Sigmoid colon (tissue), 7 donors: ENCODE measurements at regions of chr16 and their contacts with region 1.

Region 1: GRCh38 chr16:48609652-48610029 is 339 bp downstream of the N4BP1 start:
- DNase-seq: peak; percentile 82
- H3K4me3 ChIP-seq: peak overlapping the region; percentile 57 to 98 (median 98)
- H3K27ac ChIP-seq: peak overlapping the region; percentile 88 to 93 (median 92)
- H3K4me1 ChIP-seq: peaks cover 0 to 44% (median 39%) of the 10 kb centered on the region in 4 donors
- H3K27me3 ChIP-seq: no peaks in the 10 kb centered on the region
- CTCF ChIP-seq: no peak
- EP300 ChIP-seq: no peak
- POLR2A ChIP-seq: no peak

Region 2: DNA sequence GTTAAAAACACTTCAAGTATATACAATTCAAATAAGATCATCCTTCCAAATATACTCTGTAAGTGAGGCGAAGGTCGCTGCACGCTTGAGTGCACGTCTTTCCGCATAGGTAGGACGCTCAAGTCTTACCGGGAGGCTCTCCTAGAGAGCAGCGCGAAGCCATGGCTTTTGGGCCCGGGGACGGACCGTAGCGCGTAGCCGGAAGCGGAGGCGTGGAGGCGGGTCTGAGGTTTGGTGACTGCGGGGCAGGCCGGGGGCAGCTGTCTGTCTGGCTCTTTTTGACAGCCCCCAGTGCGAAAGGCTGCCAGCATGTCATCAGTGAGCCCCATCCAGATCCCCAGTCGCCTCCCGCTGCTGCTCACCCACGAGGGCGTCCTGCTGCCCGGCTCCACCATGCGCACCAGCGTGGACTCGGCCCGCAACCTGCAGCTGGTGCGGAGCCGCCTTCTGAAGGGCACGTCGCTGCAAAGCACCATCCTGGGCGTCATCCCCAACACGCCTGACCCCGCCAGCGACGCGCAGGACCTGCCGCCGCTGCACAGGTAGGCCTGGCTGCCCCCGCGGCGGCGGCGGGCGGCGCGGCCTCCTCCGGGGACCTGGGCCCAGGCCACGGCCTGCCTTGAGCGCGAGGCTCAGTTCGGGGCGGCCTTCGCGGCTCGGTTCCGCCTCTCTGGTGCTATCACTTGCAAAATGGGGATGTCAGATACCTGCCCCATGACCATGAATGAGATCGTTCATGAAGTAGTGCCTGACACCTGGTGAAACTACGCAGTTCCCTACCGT is 365.4 kb before region 1 on chr16 and contains the start of gene LONP2:
- intact Hi-C with region 1: loop called (anchors 5 kb)
- DNase-seq: peak; percentile 92
- H3K4me3 ChIP-seq: peak within 1 kb of the TSS; percentile 81 to 94 (median 82)
- H3K27ac ChIP-seq: peak within 1 kb of the TSS; percentile 85 to 90 (median 88)
- H3K4me1 ChIP-seq: peaks cover 0 to 37% (median 31%) of the 10 kb centered on the region in 4 donors
- H3K27me3 ChIP-seq: no peaks in the 10 kb centered on the region
- CTCF ChIP-seq: no peak
- EP300 ChIP-seq: peak in 1 of 4 donors; percentile 34
- POLR2A ChIP-seq: peak; percentile 38 to 46
- total RNA-seq, gene LONP2: 42.3 to 60.3 (median 51.8) TPM

Region 3: DNA sequence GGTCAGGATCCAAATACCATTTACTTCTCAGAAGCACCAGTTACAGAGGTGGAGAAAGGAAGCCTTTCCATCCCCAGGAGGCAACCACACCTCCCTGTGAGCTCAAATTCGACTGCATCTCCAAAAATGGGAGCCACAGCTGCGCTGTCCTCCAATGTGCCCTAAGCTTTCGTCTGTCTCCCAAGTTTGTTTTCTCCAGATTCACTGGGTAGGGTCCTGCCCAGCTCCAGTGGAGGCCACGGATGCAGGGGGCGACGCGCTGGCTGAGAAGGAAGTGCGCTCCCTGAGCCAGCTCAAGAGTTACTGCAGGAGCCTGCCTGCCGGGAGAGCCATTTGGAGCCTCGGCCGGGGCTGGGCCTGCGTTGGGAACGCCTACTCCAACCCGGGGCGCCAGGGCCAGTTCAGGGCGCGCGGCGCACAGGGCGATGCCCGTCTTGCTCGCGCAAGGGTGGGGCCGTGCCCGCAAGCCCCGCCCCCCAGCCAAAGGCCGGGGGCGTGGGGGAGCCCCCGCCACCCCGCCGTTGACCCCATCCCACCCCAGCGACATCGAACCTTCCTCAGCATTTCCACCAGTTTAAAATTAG is 244.0 kb before region 1 on chr16:
- intact Hi-C with region 1: loop called (anchors 5 kb)
- DNase-seq: peak; percentile 94
- H3K4me3 ChIP-seq: peak overlapping the region; percentile 64 to 70 (median 65)
- H3K27ac ChIP-seq: peak overlapping the region; percentile 85 to 93 (median 89)
- H3K4me1 ChIP-seq: peaks cover 0 to 53% (median 34%) of the 10 kb centered on the region in 4 donors
- H3K27me3 ChIP-seq: no peaks in the 10 kb centered on the region
- CTCF ChIP-seq: no peak
- EP300 ChIP-seq: no peak
- POLR2A ChIP-seq: peak; percentile 52 to 80

Region 4: GRCh38 chr16:48542020-48542473 is 67.6 kb before region 1 on chr16:
- intact Hi-C with region 1: loop called (anchors 5 kb)
- DNase-seq: peak; percentile 76
- H3K4me3 ChIP-seq: no peak overlapping the region
- H3K27ac ChIP-seq: peak overlapping the region in 3 of 4 donors; percentile 5 to 37 (median 33)
- H3K4me1 ChIP-seq: peaks cover 0 to 27% (median 22%) of the 10 kb centered on the region in 4 donors
- H3K27me3 ChIP-seq: no peaks in the 10 kb centered on the region
- CTCF ChIP-seq: peak in 2 of 4 experiments; percentile 25 to 33
- EP300 ChIP-seq: no peak
- POLR2A ChIP-seq: no peak

Region 5: GRCh38 chr16:48623304-48624016 is 13.8 kb after region 1 on chr16:
- intact Hi-C with region 1: no loop called
- DNase-seq: peak; percentile 88
- H3K4me3 ChIP-seq: peak overlapping the region; percentile 30 to 50 (median 45)
- H3K27ac ChIP-seq: peak overlapping the region; percentile 72 to 74 (median 74)
- H3K4me1 ChIP-seq: peaks cover 0 to 16% (median 12%) of the 10 kb centered on the region in 4 donors
- H3K27me3 ChIP-seq: no peaks in the 10 kb centered on the region
- CTCF ChIP-seq: peak; percentile 79 to 97 (median 93)
- EP300 ChIP-seq: no peak
- POLR2A ChIP-seq: no peak

Region 6: GRCh38 chr16:49213594-49213993 is 604.0 kb after region 1 on chr16:
- intact Hi-C with region 1: no loop called
- DNase-seq: no peak
- H3K4me3 ChIP-seq: no peak overlapping the region
- H3K27ac ChIP-seq: no peak overlapping the region
- H3K4me1 ChIP-seq: no peaks in the 10 kb centered on the region
- H3K27me3 ChIP-seq: no peaks in the 10 kb centered on the region
- CTCF ChIP-seq: no peak
- EP300 ChIP-seq: no peak
- POLR2A ChIP-seq: no peak